ENCODE measurements at regions of chr14 and their contacts with region 1.

Region 1: DNA sequence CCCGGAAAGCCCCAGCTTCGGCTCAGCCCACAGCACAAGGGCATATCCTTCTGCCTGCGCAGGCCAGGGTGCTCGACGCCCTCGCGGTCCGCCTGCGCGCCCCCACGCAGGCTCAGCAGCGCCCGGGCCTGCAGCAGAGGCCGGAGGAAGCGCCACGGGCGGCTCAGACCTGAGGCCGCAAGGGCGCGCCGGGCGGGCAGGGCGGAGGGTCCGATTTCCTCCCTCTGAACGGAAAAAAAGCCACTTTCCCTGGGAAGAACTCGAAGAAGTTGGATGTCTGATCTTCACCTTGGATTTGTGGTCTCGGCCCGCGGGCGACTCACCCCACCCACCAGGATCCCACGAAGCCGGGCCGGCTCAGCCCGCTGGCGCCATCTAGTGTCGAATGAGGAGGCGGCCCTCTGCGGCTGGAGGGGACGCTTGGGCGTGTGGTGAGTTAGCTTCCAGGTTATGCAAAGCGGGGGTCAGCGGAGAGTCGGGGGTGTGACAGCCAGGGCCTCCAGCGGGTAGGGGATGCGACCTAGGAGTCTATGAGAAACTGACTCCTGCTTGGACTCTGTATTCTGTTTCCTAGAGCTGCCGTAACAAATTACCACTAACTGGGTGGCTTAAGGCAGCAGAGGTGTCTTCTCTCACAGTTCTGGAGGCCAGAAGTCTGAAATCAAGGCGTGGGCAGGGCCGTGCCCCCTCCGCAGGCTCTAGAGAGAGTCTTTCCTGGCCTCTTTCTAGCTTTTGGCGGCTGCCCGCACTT is 40.0 kb upstream of the SRSF5 start:
- DNase-seq: no peak
- H3K4me3 ChIP-seq: peak overlapping the region; percentile 51
- CTCF ChIP-seq: peak; percentile 98

Region 2: GRCh38 chr14:69574263-69574953 is 152.5 kb before region 1 on chr14 and contains the start of gene CCDC177:
- CTCF ChIA-PET with region 1: interaction called, 32 read pairs
- POLR2A ChIA-PET with region 1: no interaction called
- DNase-seq: no peak
- H3K4me3 ChIP-seq: peak within 1 kb of the TSS; percentile 42
- CTCF ChIP-seq: peak; percentile 90

Region 3: GRCh38 chr14:69593018-69593677 is 133.8 kb before region 1 on chr14:
- CTCF ChIA-PET with region 1: interaction called, 39 read pairs
- POLR2A ChIA-PET with region 1: no interaction called
- DNase-seq: no peak
- H3K4me3 ChIP-seq: peak overlapping the region; percentile 29
- CTCF ChIP-seq: no peak

Region 4: GRCh38 chr14:69611201-69612011 is 115.5 kb before region 1 on chr14 and contains the start of gene SUSD6:
- CTCF ChIA-PET with region 1: interaction called, 79 read pairs
- POLR2A ChIA-PET with region 1: no interaction called
- DNase-seq: no peak
- H3K4me3 ChIP-seq: peak within 1 kb of the TSS; percentile 79
- CTCF ChIP-seq: no peak

Region 5: DNA sequence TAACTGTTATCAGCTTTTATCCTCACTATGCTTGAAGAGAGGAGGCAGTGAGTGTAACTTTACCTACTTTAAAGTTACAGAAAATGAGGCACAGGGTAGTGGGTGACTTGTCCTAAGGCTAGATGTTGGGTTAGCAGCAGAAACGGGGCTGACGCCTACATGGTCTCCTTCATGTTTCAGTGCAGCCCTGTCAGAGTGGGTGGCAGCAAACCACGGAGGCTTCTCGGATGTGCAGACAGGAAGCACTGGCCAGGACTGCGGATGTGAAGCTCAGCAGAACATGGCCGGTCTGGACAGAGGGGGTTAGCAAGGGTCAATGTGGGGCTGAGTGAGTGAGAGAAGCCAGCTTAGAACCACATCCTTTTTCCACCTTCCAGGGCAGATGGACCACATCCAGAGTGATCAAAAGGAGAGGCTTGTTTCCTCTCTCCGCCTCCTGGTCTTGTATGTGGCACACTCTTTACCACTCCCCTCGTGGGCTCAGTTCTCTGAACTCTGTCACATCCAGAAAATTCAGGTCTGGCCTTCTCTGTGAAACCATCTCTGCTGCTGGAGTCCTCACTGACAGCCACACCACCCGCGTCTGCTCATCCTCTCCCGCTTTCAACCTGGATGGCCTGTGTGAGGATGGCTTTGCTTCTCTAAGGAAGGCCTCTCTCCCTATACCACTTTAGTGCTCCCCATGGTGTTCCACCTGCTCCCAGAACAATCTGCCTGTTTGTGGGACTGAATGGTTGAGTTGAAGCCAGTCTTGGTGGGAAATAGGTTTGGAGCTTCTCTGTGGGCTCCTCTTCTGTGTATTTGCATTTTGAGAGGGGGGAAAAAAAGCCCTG is 101.4 kb before region 1 on chr14:
- CTCF ChIA-PET with region 1: no interaction called
- POLR2A ChIA-PET with region 1: no interaction called
- DNase-seq: no peak
- H3K4me3 ChIP-seq: no peak overlapping the region
- CTCF ChIP-seq: no peak

Region 6: GRCh38 chr14:69695322-69696203 is 31.4 kb before region 1 on chr14:
- CTCF ChIA-PET with region 1: no interaction called
- POLR2A ChIA-PET with region 1: no interaction called
- DNase-seq: no peak
- H3K4me3 ChIP-seq: no peak overlapping the region
- CTCF ChIP-seq: no peak

Region 7: GRCh38 chr14:69741055-69741454 is 14.1 kb after region 1 on chr14:
- CTCF ChIA-PET with region 1: interaction called, 16 read pairs
- POLR2A ChIA-PET with region 1: no interaction called
- DNase-seq: no peak
- H3K4me3 ChIP-seq: no peak overlapping the region
- CTCF ChIP-seq: no peak

Region 8: GRCh38 chr14:69772082-69773017 is 45.4 kb after region 1 on chr14:
- CTCF ChIA-PET with region 1: no interaction called
- POLR2A ChIA-PET with region 1: no interaction called
- DNase-seq: no peak
- H3K4me3 ChIP-seq: no peak overlapping the region
- CTCF ChIP-seq: no peak

Region 9: DNA sequence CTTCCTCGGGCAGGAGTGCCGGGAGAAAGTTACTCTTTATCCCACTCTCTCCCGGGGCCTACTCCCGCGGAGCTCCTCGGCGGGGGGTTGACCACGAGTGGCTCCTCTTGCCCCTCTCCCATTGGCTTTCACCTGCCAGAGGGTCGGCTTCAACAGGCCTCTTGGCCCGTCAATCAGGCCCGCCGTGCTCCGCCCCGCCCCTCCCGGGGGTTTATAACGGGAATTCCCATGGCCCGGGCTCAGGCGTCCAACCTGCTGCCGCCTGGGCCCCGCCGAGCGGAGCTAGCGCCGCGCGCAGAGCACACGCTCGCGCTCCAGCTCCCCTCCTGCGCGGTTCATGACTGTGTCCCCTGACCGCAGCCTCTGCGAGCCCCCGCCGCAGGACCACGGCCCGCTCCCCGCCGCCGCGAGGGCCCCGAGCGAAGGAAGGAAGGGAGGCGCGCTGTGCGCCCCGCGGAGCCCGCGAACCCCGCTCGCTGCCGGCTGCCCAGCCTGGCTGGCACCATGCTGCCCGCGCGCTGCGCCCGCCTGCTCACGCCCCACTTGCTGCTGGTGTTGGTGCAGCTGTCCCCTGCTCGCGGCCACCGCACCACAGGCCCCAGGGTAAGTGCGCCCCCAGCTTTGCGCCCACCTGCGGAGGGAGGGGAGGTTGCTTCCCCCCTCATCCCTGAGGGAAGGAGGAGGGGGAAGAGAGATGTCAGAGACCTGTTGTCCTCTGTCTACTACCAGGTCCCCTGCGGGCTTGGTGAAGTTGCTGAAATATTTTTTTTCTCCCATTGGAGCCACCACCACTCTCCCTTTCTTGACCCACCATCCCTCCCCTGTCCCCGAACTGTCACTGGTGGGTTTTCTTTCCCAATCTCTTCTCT is 152.5 kb after region 1 on chr14 and contains the start of gene SMOC1:
- CTCF ChIA-PET with region 1: no interaction called
- POLR2A ChIA-PET with region 1: no interaction called
- DNase-seq: no peak
- H3K4me3 ChIP-seq: no peak within 1 kb of the TSS
- CTCF ChIP-seq: no peak

Measured in AG04449 (cell line).